Heart right ventricle (tissue), 16 donors: ENCODE measurements at regions of chr18 and their contacts with region 1.

Region 1: GRCh38 chr18:34880882-34881834 is 160.1 kb upstream of the MAPRE2 start:
- DNase-seq: no peak
- ATAC-seq: peak in 7 of 8 donors; percentile 75 to 93 (median 86)
- H3K4me3 ChIP-seq: no peak overlapping the region
- H3K27ac ChIP-seq: peak overlapping the region; percentile 17 to 81 (median 66)
- H3K4me1 ChIP-seq: peaks cover 0 to 25% (median 11%) of the 10 kb centered on the region in 9 donors
- H3K27me3 ChIP-seq: no peaks in the 10 kb centered on the region
- CTCF ChIP-seq: peak in 6 of 9 donors; percentile 9 to 52 (median 32)

Region 2: DNA sequence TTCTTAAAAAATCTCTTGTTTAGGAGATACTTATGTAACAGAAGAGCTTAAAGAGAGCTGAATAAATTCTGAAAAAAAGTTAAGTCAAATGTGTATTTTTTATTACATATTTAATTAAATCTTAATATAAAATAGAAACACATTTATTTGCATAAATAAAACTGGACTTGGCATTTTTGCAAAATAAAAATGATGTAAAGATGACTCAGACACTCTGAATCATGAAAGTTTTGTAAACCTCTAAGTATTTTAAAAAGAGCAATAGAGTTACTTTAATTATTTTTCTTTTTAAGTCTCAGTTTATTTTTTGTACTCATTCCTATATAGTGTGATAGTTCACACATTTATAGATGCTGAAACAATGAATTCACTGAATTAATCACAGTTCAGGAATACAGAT is 281.0 kb before region 1 on chr18:
- intact Hi-C with region 1: no loop called
- DNase-seq: no peak
- ATAC-seq: no peak
- H3K4me3 ChIP-seq: no peak overlapping the region
- H3K27ac ChIP-seq: no peak overlapping the region
- H3K4me1 ChIP-seq: peaks cover 0 to 27% (median 5%) of the 10 kb centered on the region in 9 donors
- H3K27me3 ChIP-seq: no peaks in the 10 kb centered on the region
- CTCF ChIP-seq: no peak

Region 3: DNA sequence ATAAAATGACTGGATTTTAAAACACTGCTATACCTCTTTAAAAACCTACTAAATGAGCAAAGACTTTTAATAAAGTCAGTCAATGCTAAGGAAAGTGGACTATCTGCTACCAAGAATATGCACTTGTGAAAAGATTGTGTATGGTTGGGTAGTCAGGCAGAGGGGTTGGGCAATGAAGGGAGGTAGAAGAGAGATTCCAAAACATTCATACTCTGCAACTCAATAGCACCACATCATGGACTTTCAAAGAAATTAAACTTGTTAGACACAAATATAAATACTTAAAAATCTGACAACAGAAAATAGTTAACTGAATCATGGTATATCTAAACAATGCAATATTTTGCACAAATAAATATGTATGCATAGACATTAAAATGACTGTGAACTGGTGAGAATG is 20.1 kb after region 1 on chr18:
- intact Hi-C with region 1: loop called in 1 of 10 experiments (anchors 2 kb)
- DNase-seq: no peak
- ATAC-seq: no peak
- H3K4me3 ChIP-seq: no peak overlapping the region
- H3K27ac ChIP-seq: no peak overlapping the region
- H3K4me1 ChIP-seq: no peaks in the 10 kb centered on the region
- H3K27me3 ChIP-seq: no peaks in the 10 kb centered on the region
- CTCF ChIP-seq: peak in 5 of 9 donors; percentile 14 to 40 (median 19)

Region 4: DNA sequence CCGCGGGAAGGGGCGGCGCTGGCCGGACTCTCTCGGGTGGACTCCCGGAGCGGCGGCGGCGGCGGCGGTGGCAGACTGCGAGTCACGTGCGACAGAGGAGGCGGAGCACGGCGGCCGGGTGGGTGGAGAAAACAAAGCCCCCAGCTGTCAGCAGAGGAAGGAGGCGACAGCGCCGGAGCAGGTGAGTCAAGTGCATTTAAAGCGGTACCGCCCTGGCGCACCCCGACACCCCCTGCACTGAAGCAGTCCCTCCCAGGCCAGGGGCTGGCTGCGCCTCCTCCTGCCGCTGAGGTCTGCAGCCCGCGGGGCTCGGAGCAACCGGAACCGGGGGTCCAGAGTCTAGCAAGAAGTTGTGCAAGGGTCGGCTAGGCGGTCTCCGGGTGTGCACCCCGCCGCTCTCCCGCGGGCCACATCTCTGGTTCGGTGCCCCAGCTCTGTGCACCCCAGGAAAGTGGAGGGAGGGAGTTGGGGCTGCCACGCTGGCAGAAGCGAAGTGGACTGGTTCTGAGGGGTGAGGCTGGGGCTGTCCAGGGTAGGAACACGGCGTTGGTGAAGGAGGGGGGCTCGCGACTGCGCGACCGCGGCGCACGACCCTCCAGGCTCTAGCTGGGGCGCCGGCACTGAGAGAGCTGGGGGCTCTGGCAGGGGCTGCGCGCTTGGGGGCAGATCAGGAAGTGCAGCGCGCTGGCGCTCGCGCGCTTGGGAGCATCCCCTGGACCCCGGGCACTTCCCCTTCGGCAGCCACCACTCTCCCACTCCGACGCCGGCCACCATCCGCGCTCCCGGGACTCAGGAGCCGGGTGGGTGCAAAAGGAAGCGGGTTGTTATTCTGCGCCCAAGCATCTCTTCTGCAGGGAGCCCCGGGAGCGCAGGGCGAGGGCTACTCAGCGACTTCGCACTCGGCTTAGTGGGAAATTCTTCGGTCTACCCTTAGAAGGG is 96.0 kb after region 1 on chr18:
- intact Hi-C with region 1: loop called in 3 of 10 experiments (anchors 5 to 10 kb)
- DNase-seq: peak; percentile 82 to 83
- ATAC-seq: peak; percentile 75 to 88 (median 82)
- H3K4me3 ChIP-seq: peak overlapping the region; percentile 55 to 90 (median 80)
- H3K27ac ChIP-seq: peak overlapping the region in 8 of 10 donors; percentile 25 to 84 (median 62)
- H3K4me1 ChIP-seq: peaks cover 0 to 37% (median 26%) of the 10 kb centered on the region in 9 donors
- H3K27me3 ChIP-seq: peaks cover 0 to 18% (median 0%) of the 10 kb centered on the region in 7 donors
- CTCF ChIP-seq: no peak